Esophagus muscularis mucosa (tissue), 4 donors: ENCODE measurements at regions of chr10 and their contacts with region 1.

Region 1: GRCh38 chr10:62244780-62245467 is 23.7 kb downstream of the RTKN2 start:
- DNase-seq: no peak
- H3K4me3 ChIP-seq: no peak overlapping the region
- H3K27ac ChIP-seq: no peak overlapping the region
- H3K4me1 ChIP-seq: peaks cover 0 to 21% (median 16%) of the 10 kb centered on the region in 4 donors
- H3K27me3 ChIP-seq: no peaks in the 10 kb centered on the region
- CTCF ChIP-seq: peak; percentile 86 to 88 (median 88)
- EP300 ChIP-seq: no peak
- POLR2A ChIP-seq: no peak

Region 2: GRCh38 chr10:61750929-61751471 is 493.9 kb before region 1 on chr10:
- intact Hi-C with region 1: loop called (anchors 5 kb)
- DNase-seq: no peak
- H3K4me3 ChIP-seq: no peak overlapping the region
- H3K27ac ChIP-seq: no peak overlapping the region
- H3K4me1 ChIP-seq: peaks cover 0 to 47% (median 40%) of the 10 kb centered on the region in 4 donors
- H3K27me3 ChIP-seq: no peaks in the 10 kb centered on the region
- CTCF ChIP-seq: peak; percentile 53 to 66 (median 57)
- EP300 ChIP-seq: no peak
- POLR2A ChIP-seq: no peak

Region 3: GRCh38 chr10:61896854-61897661 is 347.9 kb before region 1 on chr10:
- intact Hi-C with region 1: loop called (anchors 2 kb)
- DNase-seq: no peak
- H3K4me3 ChIP-seq: peak overlapping the region; percentile 46 to 53 (median 49)
- H3K27ac ChIP-seq: peak overlapping the region; percentile 31 to 59 (median 49)
- H3K4me1 ChIP-seq: peaks cover 20 to 41% (median 35%) of the 10 kb centered on the region in 4 donors
- H3K27me3 ChIP-seq: no peaks in the 10 kb centered on the region
- CTCF ChIP-seq: peak; percentile 46 to 72 (median 56)
- EP300 ChIP-seq: no peak
- POLR2A ChIP-seq: no peak

Region 4: DNA sequence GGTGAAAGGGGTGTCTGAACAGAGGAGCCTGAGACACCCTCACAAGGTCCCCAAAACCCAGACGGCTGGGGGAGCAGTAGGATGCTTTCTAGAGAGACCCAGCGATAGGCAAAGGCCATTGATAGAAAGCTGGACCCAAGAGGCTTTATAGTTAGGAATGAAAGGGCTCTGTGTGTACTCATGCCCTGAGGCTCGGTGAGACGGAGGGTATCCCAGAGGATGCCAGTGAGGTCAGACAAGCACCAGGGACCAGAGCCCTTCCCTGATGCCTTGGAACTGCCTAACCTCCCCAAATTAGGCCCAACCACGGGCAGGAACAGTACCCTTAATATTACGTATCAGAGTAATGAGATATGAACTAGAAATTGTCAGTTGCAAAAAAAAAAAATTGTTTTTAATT is 72.3 kb after region 1 on chr10:
- intact Hi-C with region 1: no loop called
- DNase-seq: no peak
- H3K4me3 ChIP-seq: no peak overlapping the region
- H3K27ac ChIP-seq: no peak overlapping the region
- H3K4me1 ChIP-seq: no peaks in the 10 kb centered on the region
- H3K27me3 ChIP-seq: peaks cover 0 to 3% (median 0%) of the 10 kb centered on the region in 4 donors
- CTCF ChIP-seq: no peak
- EP300 ChIP-seq: no peak
- POLR2A ChIP-seq: no peak